BJ (cell line): ENCODE measurements at regions of chr16 and their contacts with region 1.

Region 1: DNA sequence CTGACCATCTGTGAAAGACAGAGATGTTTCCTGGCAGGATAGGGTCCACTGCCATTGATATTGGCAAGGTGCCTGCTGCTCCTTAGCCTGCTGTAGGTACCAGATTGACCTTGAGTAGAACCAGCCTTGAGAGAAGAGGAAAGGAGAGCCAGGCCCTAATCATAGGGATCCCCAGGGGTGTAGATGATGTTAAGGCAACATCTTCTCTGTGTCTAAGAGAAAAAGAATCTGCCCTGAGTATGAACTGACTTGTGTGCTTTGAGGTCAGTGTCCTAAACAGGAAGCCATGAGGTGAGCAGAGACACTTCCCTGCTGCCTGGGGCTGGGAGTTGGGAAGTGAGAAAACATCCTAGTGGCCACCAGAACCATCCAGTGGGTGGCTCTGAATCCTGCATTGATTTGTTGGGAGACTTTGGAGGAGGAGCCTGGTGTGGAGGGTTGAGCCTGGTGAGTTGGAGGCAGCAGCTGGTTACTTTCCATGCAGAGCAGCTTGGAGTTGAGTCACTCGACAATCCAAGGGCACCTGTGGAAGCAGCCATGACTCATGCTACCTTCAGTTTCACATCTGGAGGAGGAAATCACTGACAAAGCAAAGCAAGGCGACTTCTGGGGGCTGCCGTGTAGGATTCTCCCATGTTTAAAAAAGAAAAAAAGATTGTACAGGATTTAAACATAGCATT is 47.8 kb downstream of the BMERB1 start:
- DNase-seq: peak; percentile 89
- H3K4me3 ChIP-seq: no peak overlapping the region
- H3K27me3 ChIP-seq: no peaks in the 10 kb centered on the region
- CTCF ChIP-seq: peak; percentile 39; the same call in 1 of the 2 replicates

Region 2: DNA sequence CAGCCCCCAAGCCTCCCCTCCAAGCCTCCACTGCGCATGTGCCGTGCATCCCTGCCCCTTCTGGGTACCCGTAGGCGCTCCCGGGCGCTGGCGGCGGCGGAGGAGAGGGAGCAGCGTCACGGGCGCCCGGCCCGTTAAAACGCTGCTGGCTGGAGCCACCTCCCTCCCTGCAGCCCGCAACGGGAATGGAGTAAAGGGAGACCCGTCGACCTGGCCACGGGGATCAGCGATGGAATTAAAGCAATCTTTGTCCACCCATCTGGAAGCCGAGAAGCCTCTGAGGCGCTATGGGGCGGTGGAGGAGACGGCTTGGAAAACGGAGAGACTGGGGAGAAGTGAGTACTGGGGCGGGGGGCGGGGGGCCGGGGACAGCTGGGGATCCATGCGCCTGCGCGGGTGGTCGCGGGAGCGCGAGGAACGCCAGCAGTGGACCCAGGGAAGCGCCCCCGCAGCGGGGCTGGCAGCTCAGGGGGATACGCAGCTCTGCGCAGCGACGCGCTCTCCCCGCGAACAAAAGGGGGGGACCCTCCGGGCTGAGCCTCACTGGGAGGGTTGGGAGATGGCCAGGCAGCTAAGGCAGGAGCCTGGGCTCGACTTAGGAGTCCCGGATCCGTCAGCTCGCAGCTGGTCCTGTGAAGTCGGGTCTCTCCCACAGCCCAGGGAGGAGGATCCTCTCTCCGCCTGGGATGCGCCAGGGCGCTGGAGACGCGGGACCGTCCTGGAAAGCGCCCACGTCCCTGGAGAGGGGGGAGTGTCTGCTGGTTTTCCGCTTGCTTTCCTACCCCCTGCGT is 47.6 kb before region 1 on chr16 and contains the start of gene BMERB1:
- CTCF ChIA-PET with region 1: no interaction called
- POLR2A ChIA-PET with region 1: no interaction called
- DNase-seq: no peak
- H3K4me3 ChIP-seq: peak within 1 kb of the TSS; percentile 92
- H3K27me3 ChIP-seq: no peaks in the 10 kb centered on the region
- CTCF ChIP-seq: no peak
- polyA plus RNA-seq, gene BMERB1: 43.3 and 72.8 TPM in 2 replicates

Region 3: GRCh38 chr16:15466886-15467781 is 15.1 kb before region 1 on chr16:
- CTCF ChIA-PET with region 1: no interaction called
- POLR2A ChIA-PET with region 1: interaction called, 10 read pairs
- DNase-seq: no peak
- H3K4me3 ChIP-seq: no peak overlapping the region
- H3K27me3 ChIP-seq: no peaks in the 10 kb centered on the region
- CTCF ChIP-seq: no peak

Region 4: GRCh38 chr16:15932939-15933338 is 450.7 kb after region 1 on chr16:
- CTCF ChIA-PET with region 1: no interaction called
- POLR2A ChIA-PET with region 1: no interaction called
- DNase-seq: no peak
- H3K4me3 ChIP-seq: no peak overlapping the region
- H3K27me3 ChIP-seq: no peaks in the 10 kb centered on the region
- CTCF ChIP-seq: no peak